ENCODE measurements at regions of chr17 and their contacts with region 1.

Region 1: DNA sequence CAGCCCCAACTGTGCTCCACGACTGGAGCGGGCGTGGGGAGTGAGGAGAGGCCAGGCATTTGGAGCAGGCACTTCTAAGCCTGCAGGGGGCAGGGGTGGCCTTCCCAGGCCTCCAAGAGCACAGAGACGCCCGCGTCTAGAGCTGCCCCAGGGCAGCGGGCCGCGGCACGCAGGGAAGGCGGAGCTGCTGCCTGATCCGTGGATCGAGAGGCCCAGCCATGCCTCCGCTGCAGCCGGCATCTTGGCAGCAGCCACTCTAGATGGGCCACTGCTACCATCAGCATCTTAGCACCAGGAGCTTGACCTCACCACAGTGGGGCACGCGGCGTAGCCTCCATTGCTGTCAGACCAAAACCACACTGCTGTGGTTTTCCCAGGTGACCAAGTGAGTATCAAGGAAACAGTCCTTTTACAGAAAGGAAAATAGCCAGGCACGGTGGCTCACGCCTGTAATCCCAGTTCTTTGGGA is 20.4 kb upstream of the WDR45B start:
- DNase-seq: peak; percentile 53 to 78
- H3K4me3 ChIP-seq: peak overlapping the region in 1 of 4 experiments; percentile 25; a peak in 1 of 8 replicates
- H3K27ac ChIP-seq: no peak overlapping the region
- H3K4me1 ChIP-seq: peaks cover 0 to 9% (median 2%) of the 10 kb centered on the region in 4 experiments; a peak in 3 of 7 replicates
- H3K27me3 ChIP-seq: no peaks in the 10 kb centered on the region; a peak in 2 of 7 replicates
- CTCF ChIP-seq: peak; percentile 78 to 88 (median 81)
- EP300 ChIP-seq: no peak
- POLR2A ChIP-seq: no peak
- RAD21 ChIP-seq: peak; percentile 78 to 85

Region 2: GRCh38 chr17:82568997-82569393 is 99.7 kb before region 1 on chr17:
- CTCF ChIA-PET with region 1: no interaction called
- POLR2A ChIA-PET with region 1: no interaction called
- DNase-seq: no peak
- H3K4me3 ChIP-seq: no peak overlapping the region
- H3K27ac ChIP-seq: no peak overlapping the region
- H3K4me1 ChIP-seq: peaks cover 0 to 7% (median 3%) of the 10 kb centered on the region in 4 experiments; a peak in 6 of 7 replicates
- H3K27me3 ChIP-seq: no peaks in the 10 kb centered on the region
- CTCF ChIP-seq: no peak
- EP300 ChIP-seq: no peak
- POLR2A ChIP-seq: no peak
- RAD21 ChIP-seq: no peak

Region 3: GRCh38 chr17:82679586-82680465 is 11.2 kb after region 1 on chr17:
- CTCF ChIA-PET with region 1: interaction called, 50 read pairs
- POLR2A ChIA-PET with region 1: interaction called, 3 read pairs
- DNase-seq: no peak
- H3K4me3 ChIP-seq: no peak overlapping the region
- H3K27ac ChIP-seq: no peak overlapping the region
- H3K4me1 ChIP-seq: no peaks in the 10 kb centered on the region; a peak in 1 of 7 replicates
- H3K27me3 ChIP-seq: no peaks in the 10 kb centered on the region
- CTCF ChIP-seq: peak; percentile 61 to 70 (median 70)
- EP300 ChIP-seq: no peak
- POLR2A ChIP-seq: no peak
- RAD21 ChIP-seq: peak; percentile 74 to 79

Region 4: GRCh38 chr17:82687375-82687861 is 18.8 kb after region 1 on chr17:
- CTCF ChIA-PET with region 1: interaction called, 50 read pairs
- POLR2A ChIA-PET with region 1: interaction called, 3 read pairs
- DNase-seq: no peak
- H3K4me3 ChIP-seq: no peak overlapping the region
- H3K27ac ChIP-seq: no peak overlapping the region
- H3K4me1 ChIP-seq: no peaks in the 10 kb centered on the region; a peak in 1 of 7 replicates
- H3K27me3 ChIP-seq: no peaks in the 10 kb centered on the region; a peak in 1 of 7 replicates
- CTCF ChIP-seq: no peak
- EP300 ChIP-seq: no peak
- POLR2A ChIP-seq: no peak
- RAD21 ChIP-seq: no peak

Region 5: DNA sequence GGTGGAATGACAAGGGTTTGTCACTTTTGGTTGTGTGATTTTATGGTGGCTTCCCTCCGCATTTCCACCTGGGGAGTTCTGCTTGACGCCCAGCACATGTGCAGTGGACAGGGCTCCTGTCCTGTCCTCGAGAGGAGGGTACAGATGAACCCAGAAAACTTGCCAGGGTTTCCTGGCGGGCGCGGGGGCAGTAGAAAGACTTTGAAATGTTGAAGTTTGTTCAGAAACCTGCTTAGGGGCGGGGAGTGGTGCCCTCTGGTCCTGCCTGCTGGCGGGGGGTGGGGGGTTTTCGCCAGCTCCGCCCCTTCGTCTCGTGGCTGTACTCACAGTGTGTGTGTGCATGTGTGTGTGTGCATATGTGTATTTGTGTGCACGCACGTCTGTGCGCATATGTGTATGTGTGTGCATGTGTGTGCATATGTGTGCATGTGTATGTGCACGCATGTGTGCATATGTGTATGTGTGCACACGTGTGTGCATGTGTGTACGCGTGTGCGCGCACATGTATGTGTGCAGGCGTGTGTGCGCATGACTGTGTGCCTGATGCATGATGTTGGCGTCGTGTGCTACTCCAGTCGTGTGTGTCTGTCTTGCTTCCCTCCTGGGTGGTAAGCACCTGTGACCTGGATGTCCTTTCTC is 54.6 kb after region 1 on chr17:
- CTCF ChIA-PET with region 1: no interaction called
- POLR2A ChIA-PET with region 1: no interaction called
- DNase-seq: no peak
- H3K4me3 ChIP-seq: no peak overlapping the region
- H3K27ac ChIP-seq: no peak overlapping the region
- H3K4me1 ChIP-seq: no peaks in the 10 kb centered on the region
- H3K27me3 ChIP-seq: no peaks in the 10 kb centered on the region
- CTCF ChIP-seq: no peak
- EP300 ChIP-seq: no peak
- POLR2A ChIP-seq: no peak
- RAD21 ChIP-seq: no peak

Region 6: GRCh38 chr17:82767041-82767754 is 98.5 kb after region 1 on chr17:
- CTCF ChIA-PET with region 1: interaction called, 16 read pairs
- POLR2A ChIA-PET with region 1: no interaction called
- DNase-seq: peak in 1 of 2 experiments; percentile 87
- H3K4me3 ChIP-seq: no peak overlapping the region
- H3K27ac ChIP-seq: no peak overlapping the region
- H3K4me1 ChIP-seq: no peaks in the 10 kb centered on the region
- H3K27me3 ChIP-seq: no peaks in the 10 kb centered on the region
- CTCF ChIP-seq: peak; percentile 56 to 71 (median 68)
- EP300 ChIP-seq: no peak
- POLR2A ChIP-seq: no peak
- RAD21 ChIP-seq: peak; percentile 78 to 83

Region 7: DNA sequence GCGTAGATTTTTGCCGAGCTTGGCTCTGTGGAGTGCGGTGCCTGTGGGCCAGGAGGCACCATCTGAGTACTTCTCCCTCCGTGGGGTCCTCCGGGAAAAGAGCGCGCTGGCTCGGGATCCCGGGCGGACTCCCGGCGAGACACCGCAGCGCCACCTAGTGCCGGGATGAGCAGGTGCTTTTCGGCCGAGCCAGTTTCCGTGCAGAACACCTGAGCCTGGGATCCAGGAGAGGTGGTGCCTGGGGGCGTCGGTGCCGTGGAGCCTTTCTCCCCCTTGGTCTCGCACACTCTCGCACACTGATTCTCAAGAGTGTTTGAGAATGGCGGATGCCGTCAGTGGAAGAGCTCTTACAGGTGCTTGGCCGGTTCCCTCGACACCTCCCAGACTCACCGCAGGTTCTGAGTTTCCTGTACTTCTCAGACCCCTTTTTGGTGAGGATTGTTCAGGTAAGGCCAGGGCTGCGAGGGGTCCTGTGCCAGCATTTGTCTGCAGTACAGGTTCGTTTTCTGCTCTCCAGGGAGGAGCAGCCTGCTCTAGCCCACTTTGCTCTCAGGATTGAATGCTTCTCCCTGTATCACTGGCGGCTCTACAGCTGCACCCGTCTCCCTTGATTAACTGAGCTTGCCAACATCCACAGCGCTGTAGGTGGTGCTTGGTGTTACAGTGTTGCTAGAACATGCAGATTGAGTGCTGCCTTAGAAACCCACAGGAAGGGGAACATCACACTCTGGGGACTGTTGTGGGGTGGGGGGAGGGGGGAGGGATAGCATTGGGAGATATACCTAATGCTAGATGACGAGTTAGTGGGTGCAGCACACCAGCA is 106.5 kb after region 1 on chr17:
- CTCF ChIA-PET with region 1: interaction called, 11 read pairs
- POLR2A ChIA-PET with region 1: no interaction called
- DNase-seq: peak in 1 of 2 experiments; percentile 93
- H3K4me3 ChIP-seq: no peak overlapping the region
- H3K27ac ChIP-seq: no peak overlapping the region
- H3K4me1 ChIP-seq: no peaks in the 10 kb centered on the region
- H3K27me3 ChIP-seq: no peaks in the 10 kb centered on the region
- CTCF ChIP-seq: peak; percentile 87 to 97 (median 91)
- EP300 ChIP-seq: no peak
- POLR2A ChIP-seq: no peak
- RAD21 ChIP-seq: peak; percentile 60 to 64

Measured in H1 (cell line).